ENCODE measurements at regions of chr11 and their contacts with region 1.

Region 1: DNA sequence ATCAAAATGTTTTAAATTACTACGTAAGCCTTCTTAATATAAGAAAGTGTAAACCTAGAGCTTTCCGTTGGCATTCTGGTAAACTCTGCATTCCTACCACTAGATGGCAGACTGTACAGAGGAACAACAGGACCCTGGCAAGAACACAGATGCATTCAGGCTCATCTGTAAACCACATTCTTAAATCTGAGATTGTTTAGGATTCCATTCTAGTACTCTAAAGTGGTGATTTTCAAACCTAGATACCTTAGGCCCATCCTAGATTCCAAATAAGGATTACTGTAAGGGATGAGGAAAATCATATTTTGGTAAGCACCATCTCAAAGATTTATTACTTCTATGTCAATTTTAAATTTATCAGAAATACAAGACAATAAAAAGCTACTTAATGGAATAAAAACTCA is 26.9 kb downstream of the PICALM start:
- DNase-seq: peak; percentile 83
- H3K4me3 ChIP-seq: peak overlapping the region in 3 of 4 donors; percentile 15 to 23 (median 18)
- H3K27ac ChIP-seq: peak overlapping the region; percentile 52 to 74 (median 69)
- H3K4me1 ChIP-seq: peaks cover 0 to 78% (median 63%) of the 10 kb centered on the region in 4 donors
- H3K27me3 ChIP-seq: no peaks in the 10 kb centered on the region
- CTCF ChIP-seq: peak; percentile 83 to 96 (median 90)
- EP300 ChIP-seq: peak in 1 of 4 donors; percentile 34
- POLR2A ChIP-seq: no peak

Region 2: DNA sequence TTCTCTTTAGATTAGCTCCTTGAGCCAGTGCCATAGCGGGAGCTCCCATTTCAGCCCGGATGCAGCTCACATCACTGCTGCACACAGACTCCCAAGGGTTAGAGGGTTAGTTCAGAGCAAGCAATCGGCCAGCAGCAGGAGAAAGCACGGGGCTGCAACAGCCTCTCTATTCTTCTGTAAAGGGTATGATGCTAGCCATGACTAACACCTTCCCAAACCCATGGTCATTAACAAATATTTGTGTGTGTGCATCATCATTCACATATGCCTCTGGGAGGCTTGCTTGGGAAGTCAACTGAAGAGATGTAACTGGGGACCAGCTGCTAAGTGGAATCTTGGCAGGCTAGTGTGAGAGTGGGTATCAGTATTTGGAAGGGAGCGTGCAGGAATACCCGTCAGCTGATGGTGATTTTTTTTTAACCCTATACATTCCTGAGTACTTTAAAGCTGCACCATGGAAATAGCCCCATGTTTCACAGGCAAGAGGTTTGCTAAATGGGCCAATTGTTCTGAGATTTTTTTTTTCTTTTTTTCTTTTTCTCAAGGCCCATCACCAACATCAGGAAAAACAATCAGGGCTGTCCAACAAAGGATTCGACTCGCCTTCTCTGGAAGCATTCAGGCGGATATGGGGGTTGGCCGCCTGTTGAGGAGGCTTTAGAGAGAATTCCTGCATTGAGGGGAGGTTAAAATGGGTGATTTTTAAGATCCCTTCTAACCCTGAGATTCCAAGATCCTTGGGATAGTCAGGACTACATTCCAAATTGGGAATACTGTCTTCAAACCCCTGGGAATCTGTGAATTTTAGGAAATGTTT is 322.8 kb before region 1 on chr11:
- intact Hi-C with region 1: no loop called
- DNase-seq: peak; percentile 66
- H3K4me3 ChIP-seq: peak overlapping the region in 3 of 4 donors; percentile 11 to 14 (median 12)
- H3K27ac ChIP-seq: peak overlapping the region in 3 of 4 donors; percentile 25 to 34 (median 33)
- H3K4me1 ChIP-seq: peaks cover 0 to 9% (median 0%) of the 10 kb centered on the region in 4 donors
- H3K27me3 ChIP-seq: no peaks in the 10 kb centered on the region
- CTCF ChIP-seq: no peak
- EP300 ChIP-seq: peak in 1 of 4 donors; percentile 5
- POLR2A ChIP-seq: no peak

Region 3: DNA sequence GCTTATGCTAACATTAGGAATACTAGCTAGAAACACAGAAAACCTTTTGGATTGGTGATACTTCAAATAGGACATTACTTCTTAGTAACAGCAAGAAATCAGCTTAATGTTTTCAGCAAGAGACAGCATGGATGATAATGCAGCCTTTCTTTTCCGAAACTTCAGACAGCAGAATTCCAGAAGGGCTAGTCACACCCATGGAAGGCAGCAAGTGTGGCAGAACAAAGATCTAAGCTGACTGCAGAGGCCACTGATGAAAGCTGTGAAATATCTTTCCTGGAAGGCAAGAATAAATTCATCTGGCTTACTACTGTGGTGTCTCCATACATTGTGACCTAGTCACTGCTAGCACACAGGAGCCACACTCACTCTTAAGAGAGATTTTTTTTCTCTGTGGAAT is 86.4 kb before region 1 on chr11:
- intact Hi-C with region 1: loop called (anchors 5 kb)
- DNase-seq: no peak
- H3K4me3 ChIP-seq: no peak overlapping the region
- H3K27ac ChIP-seq: peak overlapping the region; percentile 42 to 74 (median 68)
- H3K4me1 ChIP-seq: peaks cover 0 to 34% (median 21%) of the 10 kb centered on the region in 4 donors
- H3K27me3 ChIP-seq: no peaks in the 10 kb centered on the region
- CTCF ChIP-seq: no peak
- EP300 ChIP-seq: no peak
- POLR2A ChIP-seq: no peak

Region 4: DNA sequence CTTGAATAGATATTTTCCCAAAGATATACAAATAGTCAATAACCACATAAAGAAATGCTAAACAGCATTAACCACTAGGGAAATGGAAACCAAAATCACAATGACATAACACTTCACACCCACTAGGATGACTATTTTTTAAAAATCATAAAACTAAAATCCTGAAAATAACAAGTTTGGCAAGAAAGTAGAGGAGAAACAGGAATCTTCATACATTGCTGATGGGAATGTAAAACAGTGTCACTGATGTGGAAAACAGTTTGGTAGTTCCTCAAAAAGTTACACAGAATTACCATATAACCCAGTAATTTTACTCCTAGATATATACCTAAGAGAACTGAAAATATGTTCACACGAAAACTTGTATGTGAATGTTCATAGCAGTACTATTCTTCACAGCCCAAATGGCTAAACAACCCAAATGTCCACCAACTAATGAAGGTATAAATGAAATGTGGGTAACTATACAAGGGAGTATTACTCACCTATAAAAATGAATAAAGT is 14.4 kb after region 1 on chr11:
- intact Hi-C with region 1: no loop called
- DNase-seq: no peak
- H3K4me3 ChIP-seq: no peak overlapping the region
- H3K27ac ChIP-seq: no peak overlapping the region
- H3K4me1 ChIP-seq: peaks cover 0 to 75% (median 60%) of the 10 kb centered on the region in 4 donors
- H3K27me3 ChIP-seq: no peaks in the 10 kb centered on the region
- CTCF ChIP-seq: no peak
- EP300 ChIP-seq: no peak
- POLR2A ChIP-seq: no peak

Region 5: GRCh38 chr11:86119062-86119461 is 77.1 kb after region 1 on chr11:
- intact Hi-C with region 1: loop called (anchors 2 kb)
- DNase-seq: peak; percentile 72
- H3K4me3 ChIP-seq: no peak overlapping the region
- H3K27ac ChIP-seq: peak overlapping the region; percentile 39 to 76 (median 55)
- H3K4me1 ChIP-seq: peaks cover 0 to 48% (median 39%) of the 10 kb centered on the region in 4 donors
- H3K27me3 ChIP-seq: no peaks in the 10 kb centered on the region
- CTCF ChIP-seq: no peak
- EP300 ChIP-seq: peak; percentile 44 to 92 (median 83)
- POLR2A ChIP-seq: no peak

Region 6: DNA sequence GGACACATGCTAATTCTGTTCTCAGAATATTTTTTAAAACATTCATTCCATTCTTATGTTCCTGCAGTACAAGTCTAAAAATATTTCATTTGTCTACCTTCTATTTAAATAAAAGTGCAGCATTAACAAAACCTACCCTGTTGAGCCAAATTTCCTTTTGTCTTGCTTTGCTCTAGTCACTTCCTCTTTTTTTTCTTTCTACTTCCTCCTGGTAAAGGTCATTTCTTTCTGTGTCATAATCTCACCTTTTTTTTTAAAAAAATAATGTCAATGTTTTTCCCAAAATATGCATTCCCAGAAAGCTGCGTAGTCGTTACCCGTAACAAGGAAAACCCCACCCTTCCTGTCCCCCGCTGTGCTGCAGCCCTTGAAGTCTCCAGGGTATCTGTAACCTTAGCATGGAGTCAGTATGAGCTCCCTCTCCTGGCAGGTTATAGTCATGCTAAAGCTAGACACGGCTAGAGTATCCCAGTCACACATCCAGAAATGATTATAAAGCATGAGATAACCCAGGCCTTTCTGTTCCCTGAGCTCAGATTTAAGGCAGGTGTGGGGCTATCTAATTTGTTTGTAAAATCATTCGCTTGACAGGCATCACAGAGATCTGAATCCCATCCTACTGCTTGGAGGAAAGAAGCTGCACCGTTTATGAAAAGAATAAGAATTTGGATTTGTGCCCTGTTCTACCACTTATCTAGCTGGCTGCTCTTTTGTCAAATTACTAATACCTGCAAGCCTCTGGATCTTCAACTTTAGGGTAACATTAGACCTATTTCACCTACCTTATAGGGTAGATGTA is 151.5 kb after region 1 on chr11:
- intact Hi-C with region 1: loop called (anchors 2 kb)
- DNase-seq: peak; percentile 77
- H3K4me3 ChIP-seq: peak overlapping the region in 2 of 4 donors; percentile 11 to 16
- H3K27ac ChIP-seq: peak overlapping the region in 3 of 4 donors; percentile 43 to 45 (median 44)
- H3K4me1 ChIP-seq: peaks cover 0 to 35% (median 23%) of the 10 kb centered on the region in 4 donors
- H3K27me3 ChIP-seq: no peaks in the 10 kb centered on the region
- CTCF ChIP-seq: peak; percentile 56 to 82 (median 73)
- EP300 ChIP-seq: peak in 1 of 4 donors; percentile 83
- POLR2A ChIP-seq: no peak

Region 7: GRCh38 chr11:86244522-86245368 is 202.8 kb after region 1 on chr11 and contains the start of gene EED:
- intact Hi-C with region 1: no loop called
- DNase-seq: peak; percentile 97
- H3K4me3 ChIP-seq: peak within 1 kb of the TSS; percentile 68 to 96 (median 75)
- H3K27ac ChIP-seq: peak within 1 kb of the TSS; percentile 95 to 100 (median 98)
- H3K4me1 ChIP-seq: peaks cover 0 to 42% (median 31%) of the 10 kb centered on the region in 4 donors
- H3K27me3 ChIP-seq: no peaks in the 10 kb centered on the region
- CTCF ChIP-seq: no peak
- EP300 ChIP-seq: no peak
- POLR2A ChIP-seq: peak; percentile 29 to 46
- total RNA-seq, gene EED: 18.2 to 28.6 (median 23.5) TPM

Measured in sigmoid colon (tissue), 7 donors.